GM12878 (cell line): ENCODE measurements at regions of chr1 and their contacts with region 1.

Region 1: DNA sequence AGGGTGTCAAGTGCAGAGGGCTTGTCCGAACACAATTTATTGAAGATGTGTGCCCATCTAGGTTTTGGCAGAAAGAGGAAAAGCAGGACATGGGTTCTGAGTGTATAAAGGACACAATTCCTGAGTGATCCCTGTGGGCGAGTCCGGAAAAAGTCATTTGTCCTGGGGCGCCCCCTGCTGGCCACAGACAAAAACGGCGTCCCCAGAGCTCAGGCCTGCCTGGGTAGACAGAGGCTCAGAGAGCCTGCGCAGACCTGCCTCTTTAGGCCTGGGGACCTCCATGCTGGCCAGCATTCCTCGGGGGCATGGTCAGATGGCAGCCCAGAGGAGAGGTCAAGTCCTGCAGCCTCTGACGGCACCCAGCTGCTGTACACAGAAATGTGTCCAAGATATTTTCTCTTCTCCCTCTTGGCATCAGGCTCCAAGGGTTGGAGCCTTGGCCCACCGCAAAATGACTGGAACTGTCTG is 65.5 kb upstream of the LRP8 start:
- DNase-seq: no peak
- ATAC-seq: peak; percentile 93
- H3K4me3 ChIP-seq: no peak overlapping the region
- H3K27ac ChIP-seq: no peak overlapping the region
- H3K4me1 ChIP-seq: peaks cover 6% of the 10 kb centered on the region
- H3K27me3 ChIP-seq: no peaks in the 10 kb centered on the region; a peak in 2 of 4 replicates
- CTCF ChIP-seq: peak; percentile 87 to 88 (median 87)
- EP300 ChIP-seq: no peak
- POLR2A ChIP-seq: no peak
- RAD21 ChIP-seq: peak; percentile 92

Region 2: GRCh38 chr1:53278201-53278725 is 115.1 kb before region 1 on chr1:
- CTCF ChIA-PET with region 1: interaction called, 185 read pairs
- POLR2A ChIA-PET with region 1: interaction called, 5 read pairs
- RAD21 ChIA-PET with region 1: interaction called, 105 read pairs
- SMC1A ChIA-PET with region 1: interaction called, 107 read pairs
- in situ Hi-C with region 1: loop called (anchors 5 kb)
- intact Hi-C with region 1: loop called (anchors 1 kb)
- DNase-seq: no peak
- ATAC-seq: peak; percentile 92
- H3K4me3 ChIP-seq: no peak overlapping the region
- H3K27ac ChIP-seq: no peak overlapping the region
- H3K4me1 ChIP-seq: no peaks in the 10 kb centered on the region
- H3K27me3 ChIP-seq: no peaks in the 10 kb centered on the region
- CTCF ChIP-seq: peak; percentile 76 to 92 (median 87)
- EP300 ChIP-seq: no peak
- POLR2A ChIP-seq: no peak
- RAD21 ChIP-seq: peak; percentile 77

Region 3: GRCh38 chr1:53294567-53294966 is 98.8 kb before region 1 on chr1:
- CTCF ChIA-PET with region 1: interaction called, 95 read pairs
- POLR2A ChIA-PET with region 1: no interaction called
- RAD21 ChIA-PET with region 1: interaction called, 27 read pairs
- SMC1A ChIA-PET with region 1: interaction called, 10 read pairs
- in situ Hi-C with region 1: no loop called
- intact Hi-C with region 1: no loop called
- DNase-seq: no peak
- ATAC-seq: no peak
- H3K4me3 ChIP-seq: no peak overlapping the region
- H3K27ac ChIP-seq: peak overlapping the region; percentile 77
- H3K4me1 ChIP-seq: peaks cover 51% of the 10 kb centered on the region
- H3K27me3 ChIP-seq: no peaks in the 10 kb centered on the region
- CTCF ChIP-seq: no peak
- EP300 ChIP-seq: no peak
- POLR2A ChIP-seq: no peak
- RAD21 ChIP-seq: no peak

Region 4: GRCh38 chr1:53367503-53368304 is 25.7 kb before region 1 on chr1:
- CTCF ChIA-PET with region 1: interaction called, 10 read pairs
- POLR2A ChIA-PET with region 1: interaction called, 3 read pairs
- RAD21 ChIA-PET with region 1: interaction called, 12 read pairs
- SMC1A ChIA-PET with region 1: interaction called, 5 read pairs
- in situ Hi-C with region 1: no loop called
- intact Hi-C with region 1: no loop called
- DNase-seq: peak; percentile 64
- ATAC-seq: peak; percentile 96
- H3K4me3 ChIP-seq: peak overlapping the region; percentile 66
- H3K27ac ChIP-seq: peak overlapping the region; percentile 53
- H3K4me1 ChIP-seq: peaks cover 8% of the 10 kb centered on the region
- H3K27me3 ChIP-seq: no peaks in the 10 kb centered on the region
- CTCF ChIP-seq: no peak
- EP300 ChIP-seq: no peak
- POLR2A ChIP-seq: peak; percentile 54; the same call in 1 of the 2 replicates
- RAD21 ChIP-seq: no peak

Region 5: DNA sequence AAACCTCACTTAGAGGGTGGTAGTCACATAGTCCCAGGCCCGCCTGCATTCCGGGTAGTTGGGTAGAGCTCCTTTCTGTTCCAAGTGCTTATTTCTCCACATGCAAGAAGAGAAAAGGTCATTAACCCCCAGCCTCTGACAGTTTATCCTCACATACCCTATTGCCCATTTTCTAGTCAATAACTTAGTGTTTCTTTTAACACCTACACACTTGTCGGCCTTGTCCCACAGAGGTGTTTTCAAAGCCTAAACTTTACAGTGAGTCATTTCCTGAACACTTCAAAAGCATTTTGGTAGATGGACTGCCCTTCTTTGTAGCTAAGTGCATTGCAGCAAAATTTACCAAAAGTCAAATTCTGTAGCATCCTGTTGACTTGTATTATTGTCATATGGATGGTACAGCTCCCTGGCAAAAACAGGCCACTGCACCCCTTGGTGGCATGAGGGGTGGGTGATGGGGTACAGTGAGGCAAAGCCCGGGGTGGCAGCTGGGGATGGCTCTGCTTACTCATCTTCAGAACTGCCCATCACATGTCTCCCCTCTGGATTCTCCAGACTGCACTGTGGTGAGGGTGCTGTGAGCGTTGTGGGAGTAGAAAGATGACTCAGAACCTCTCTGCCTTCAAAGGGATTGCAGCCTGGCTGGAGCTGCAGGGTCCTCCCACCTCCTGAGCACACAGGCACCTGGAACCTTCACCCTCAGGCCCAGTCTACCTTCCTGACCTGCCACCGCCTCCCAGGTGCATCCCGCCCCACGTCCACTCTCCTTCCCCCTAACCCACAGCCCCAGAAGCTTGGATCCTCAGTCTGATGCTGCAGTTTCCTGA is 20.0 kb after region 1 on chr1:
- CTCF ChIA-PET with region 1: interaction called, 14 read pairs
- POLR2A ChIA-PET with region 1: interaction called, 13 read pairs
- RAD21 ChIA-PET with region 1: interaction called, 17 read pairs
- SMC1A ChIA-PET with region 1: interaction called, 25 read pairs
- in situ Hi-C with region 1: no loop called
- intact Hi-C with region 1: no loop called
- DNase-seq: peak; percentile 60
- ATAC-seq: peak; percentile 70
- H3K4me3 ChIP-seq: no peak overlapping the region
- H3K27ac ChIP-seq: peak overlapping the region; percentile 13
- H3K4me1 ChIP-seq: peaks cover 35% of the 10 kb centered on the region
- H3K27me3 ChIP-seq: no peaks in the 10 kb centered on the region
- CTCF ChIP-seq: no peak
- EP300 ChIP-seq: peak; percentile 13 to 60; a peak in 2 of 4 replicates
- POLR2A ChIP-seq: no peak
- RAD21 ChIP-seq: no peak

Region 6: DNA sequence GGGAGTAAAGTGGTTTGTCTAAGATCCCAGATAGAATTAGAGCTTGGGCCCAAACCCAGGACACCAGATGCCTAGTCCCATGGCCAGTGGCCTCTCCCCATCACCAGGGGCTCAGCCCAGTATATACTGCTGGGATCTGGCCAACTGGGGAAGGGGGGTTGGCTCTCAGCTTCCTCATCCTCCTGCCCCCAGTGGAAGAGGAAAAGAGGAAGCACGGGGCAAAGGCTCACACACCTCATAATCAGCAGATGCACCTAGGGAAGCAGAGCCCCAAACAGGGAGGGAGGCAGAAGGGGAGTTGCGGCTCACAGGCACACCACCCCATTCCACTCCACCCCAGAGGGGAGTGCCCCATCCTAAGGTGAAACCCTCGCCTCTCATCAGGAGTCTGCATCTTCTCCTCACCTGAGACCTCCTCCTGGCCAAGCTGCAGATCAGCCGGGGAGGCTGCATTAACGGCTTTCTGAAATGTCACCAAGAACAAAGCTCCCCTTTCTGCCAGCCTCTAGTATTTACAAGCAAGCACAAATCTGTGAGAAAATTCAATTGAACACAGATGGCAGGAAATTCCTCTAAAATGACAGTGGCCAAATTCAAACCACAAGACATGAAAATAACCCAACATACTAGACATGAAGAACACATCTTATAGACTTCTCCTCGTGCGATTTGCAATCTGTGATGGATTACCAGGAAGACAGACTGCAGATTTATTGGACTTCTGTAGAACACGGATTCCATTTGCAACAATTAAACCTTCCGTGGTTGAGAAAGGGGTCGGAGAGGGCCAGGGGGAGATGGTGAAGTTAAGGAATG is 262.8 kb after region 1 on chr1:
- CTCF ChIA-PET with region 1: no interaction called
- POLR2A ChIA-PET with region 1: no interaction called
- RAD21 ChIA-PET with region 1: no interaction called
- SMC1A ChIA-PET with region 1: no interaction called
- in situ Hi-C with region 1: no loop called
- intact Hi-C with region 1: no loop called
- DNase-seq: no peak
- ATAC-seq: no peak
- H3K4me3 ChIP-seq: no peak overlapping the region
- H3K27ac ChIP-seq: no peak overlapping the region
- H3K4me1 ChIP-seq: no peaks in the 10 kb centered on the region
- H3K27me3 ChIP-seq: peaks cover 4 to 5% of the 10 kb centered on the region in 2 experiments; a peak in 3 of 4 replicates
- CTCF ChIP-seq: no peak
- EP300 ChIP-seq: no peak
- POLR2A ChIP-seq: no peak
- RAD21 ChIP-seq: no peak